ENCODE measurements at regions of chr4 and their contacts with region 1.

Region 1: GRCh38 chr4:75724066-75724866 is at the start of gene USO1:
- DNase-seq: peak; percentile 99
- ATAC-seq: peak; percentile 97
- total RNA-seq, gene USO1: 96.8 TPM

Region 2: DNA sequence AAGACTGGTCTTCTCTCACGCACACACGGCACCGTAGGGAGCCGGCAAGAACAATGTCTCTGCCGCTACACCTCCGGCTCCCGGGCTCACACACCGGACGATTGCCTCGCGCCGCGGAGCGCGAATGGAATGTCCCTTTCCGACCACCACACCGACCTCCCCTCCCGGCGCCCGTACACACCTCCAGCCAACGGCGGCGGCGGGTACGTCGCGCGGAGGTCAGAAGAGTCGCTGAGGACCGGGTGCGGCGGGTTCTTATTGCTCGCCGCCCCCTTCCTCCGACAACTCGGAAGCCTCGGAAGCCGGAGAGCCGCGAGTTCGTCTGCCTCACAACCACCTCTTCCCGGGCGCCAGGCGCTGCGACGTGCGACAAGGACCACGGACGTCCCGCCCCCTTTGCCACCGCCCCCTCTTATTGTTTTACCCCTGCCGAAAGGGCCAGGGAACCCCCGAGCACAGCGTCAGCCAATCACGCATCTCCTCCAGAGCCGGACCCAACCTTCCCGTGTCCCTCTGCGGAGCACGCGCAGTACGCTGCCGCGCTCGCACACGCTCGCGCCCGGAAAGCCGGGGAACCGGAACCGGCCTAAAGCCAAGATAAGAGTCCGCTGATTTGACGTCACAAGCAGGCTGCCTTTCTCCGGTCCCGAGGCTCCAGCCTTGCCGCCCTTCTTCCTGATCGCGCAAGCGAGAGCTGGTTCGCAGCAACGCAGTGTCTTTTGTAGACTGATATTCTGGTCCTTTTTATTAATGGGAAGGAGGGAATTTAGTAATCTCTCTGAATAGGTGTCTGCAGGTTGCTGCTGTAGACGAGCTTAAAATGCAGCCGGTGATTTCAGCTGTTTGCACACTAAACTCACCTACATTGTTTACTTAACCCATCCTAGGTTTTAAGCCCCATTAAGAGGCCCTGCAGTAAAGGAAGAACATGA is 51.0 kb before region 1 on chr4 and contains the start of gene G3BP2:
- intact Hi-C with region 1: loop called (anchors 10 kb)
- DNase-seq: peak; percentile 99
- ATAC-seq: peak; percentile 99
- total RNA-seq, gene G3BP2: 74.1 TPM

Measured in left ventricle myocardium superior (tissue), 1 donor.